HAP-1 (cell line): ENCODE measurements at regions of chr6 and their contacts with region 1.

Region 1: GRCh38 chr6:26031595-26032339 is 55.5 kb upstream of the HFE start:
- DNase-seq: peak; percentile 93 to 97
- H3K4me3 ChIP-seq: peak overlapping the region; percentile 54
- H3K4me1 ChIP-seq: peaks cover 55% of the 10 kb centered on the region
- H3K27me3 ChIP-seq: no peaks in the 10 kb centered on the region

Region 2: DNA sequence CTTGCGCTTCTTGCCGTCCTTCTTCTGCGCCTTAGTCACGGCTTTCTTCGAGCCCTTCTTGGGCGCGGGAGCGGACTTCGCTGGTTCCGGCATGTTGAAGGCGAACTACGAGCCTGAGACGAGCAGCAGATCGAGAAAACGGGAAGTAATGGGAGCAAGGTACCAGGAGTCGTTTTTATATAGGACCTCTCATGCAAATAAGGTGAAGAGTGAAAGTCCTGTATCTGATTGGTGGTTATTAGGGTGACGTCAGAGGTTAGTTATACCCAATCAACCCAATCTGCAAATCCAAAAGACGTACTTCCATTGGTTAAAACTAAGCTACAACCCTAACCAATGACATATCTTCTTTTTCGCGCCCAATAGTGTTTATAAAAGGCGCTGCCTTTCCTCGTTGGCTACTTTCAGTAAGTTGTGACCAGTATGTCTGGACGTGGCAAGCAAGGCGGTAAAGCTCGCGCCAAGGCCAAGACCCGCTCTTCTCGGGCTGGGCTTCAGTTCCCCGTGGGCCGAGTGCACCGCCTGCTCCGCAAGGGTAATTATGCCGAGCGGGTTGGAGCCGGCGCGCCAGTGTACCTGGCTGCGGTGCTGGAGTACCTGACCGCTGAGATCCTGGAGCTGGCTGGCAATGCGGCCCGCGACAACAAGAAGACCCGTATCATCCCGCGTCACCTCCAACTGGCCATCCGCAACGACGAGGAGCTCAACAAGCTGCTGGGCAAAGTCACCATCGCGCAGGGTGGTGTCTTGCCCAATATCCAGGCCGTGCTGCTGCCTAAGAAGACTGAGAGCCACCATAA is 1115.1 kb after region 1 on chr6:
- in situ Hi-C with region 1: loop called (anchors 5 kb)
- DNase-seq: peak; percentile 90 to 98
- H3K4me3 ChIP-seq: peak overlapping the region; percentile 51
- H3K4me1 ChIP-seq: peaks cover 6% of the 10 kb centered on the region
- H3K27me3 ChIP-seq: no peaks in the 10 kb centered on the region